Dorsolateral prefrontal cortex (tissue), 120 donors: ENCODE measurements at regions of chr5 and their contacts with region 1.

Region 1: DNA sequence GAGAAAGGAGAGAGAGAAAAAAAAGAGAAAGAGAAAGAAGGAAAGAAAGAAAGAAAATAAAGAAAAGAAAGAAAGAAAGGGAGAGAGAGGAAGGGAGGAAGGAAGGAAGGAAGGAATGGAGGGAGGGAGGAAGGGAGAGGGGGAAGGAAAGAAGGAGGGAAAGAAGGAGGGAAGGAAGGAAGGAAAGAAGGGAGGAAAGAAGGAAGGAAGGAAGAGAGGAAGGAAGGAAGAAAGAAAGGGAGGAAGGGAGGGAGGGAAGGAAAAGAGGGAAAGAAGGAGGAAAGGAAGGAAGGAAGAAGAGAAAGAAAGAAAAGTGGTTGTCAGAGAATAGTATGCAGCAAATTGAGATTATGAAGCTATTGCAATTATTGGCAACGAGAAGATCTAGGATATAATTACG is 49.9 kb upstream of the NIPBL start:
- DNase-seq: no peak
- H3K4me3 ChIP-seq: no peak overlapping the region
- H3K27ac ChIP-seq: no peak overlapping the region
- H3K27me3 ChIP-seq: no peaks in the 10 kb centered on the region
- CTCF ChIP-seq: no peak

Region 2: GRCh38 chr5:36842087-36842486 is 15.4 kb after region 1 on chr5:
- intact Hi-C with region 1: loop called in 1 of 2 experiments (anchors 2 kb)
- DNase-seq: no peak
- H3K4me3 ChIP-seq: no peak overlapping the region
- H3K27ac ChIP-seq: no peak overlapping the region
- H3K27me3 ChIP-seq: no peaks in the 10 kb centered on the region
- CTCF ChIP-seq: no peak